ENCODE measurements at regions of chr15 and their contacts with region 1.

Region 1: GRCh38 chr15:33700695-33701304 is 267.5 kb upstream of the CHRM5 start:
- DNase-seq: peak; percentile 64
- ATAC-seq: peak; percentile 68
- H3K4me3 Mint-ChIP-seq: no peak overlapping the region
- H3K27ac Mint-ChIP-seq: no peak overlapping the region
- H3K4me1 Mint-ChIP-seq: no peaks in the 10 kb centered on the region
- H3K27me3 Mint-ChIP-seq: peaks cover 8% of the 10 kb centered on the region

Region 2: GRCh38 chr15:33292717-33293307 is 408.0 kb before region 1 on chr15:
- CTCF ChIA-PET with region 1: interaction called, 22 read pairs
- DNase-seq: peak; percentile 51
- ATAC-seq: no peak
- H3K4me3 Mint-ChIP-seq: no peak overlapping the region
- H3K27ac Mint-ChIP-seq: no peak overlapping the region
- H3K4me1 Mint-ChIP-seq: no peaks in the 10 kb centered on the region
- H3K27me3 Mint-ChIP-seq: peaks cover 2% of the 10 kb centered on the region

Region 3: DNA sequence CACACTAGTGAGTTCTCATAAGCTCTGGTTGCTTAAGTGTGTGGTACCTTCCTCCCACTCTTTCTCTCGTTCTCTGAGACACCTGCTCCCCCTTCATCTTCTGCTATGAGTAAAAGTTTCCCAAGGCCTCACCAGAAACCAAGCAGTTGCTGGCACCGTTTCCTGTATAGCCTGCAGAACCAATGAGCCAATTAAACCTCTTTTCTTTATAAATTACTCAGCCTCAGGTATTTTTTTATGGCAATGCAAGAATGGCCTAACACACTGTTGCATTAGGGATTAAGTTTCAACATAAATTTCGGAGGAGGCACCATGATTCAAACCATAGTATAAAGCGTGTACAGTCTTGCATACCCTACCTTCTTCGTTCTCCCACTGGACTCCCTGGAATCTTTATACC is 15.2 kb after region 1 on chr15:
- CTCF ChIA-PET with region 1: interaction called, 10 read pairs
- DNase-seq: no peak
- ATAC-seq: no peak
- H3K4me3 Mint-ChIP-seq: no peak overlapping the region
- H3K27ac Mint-ChIP-seq: no peak overlapping the region
- H3K4me1 Mint-ChIP-seq: no peaks in the 10 kb centered on the region
- H3K27me3 Mint-ChIP-seq: no peaks in the 10 kb centered on the region

Region 4: DNA sequence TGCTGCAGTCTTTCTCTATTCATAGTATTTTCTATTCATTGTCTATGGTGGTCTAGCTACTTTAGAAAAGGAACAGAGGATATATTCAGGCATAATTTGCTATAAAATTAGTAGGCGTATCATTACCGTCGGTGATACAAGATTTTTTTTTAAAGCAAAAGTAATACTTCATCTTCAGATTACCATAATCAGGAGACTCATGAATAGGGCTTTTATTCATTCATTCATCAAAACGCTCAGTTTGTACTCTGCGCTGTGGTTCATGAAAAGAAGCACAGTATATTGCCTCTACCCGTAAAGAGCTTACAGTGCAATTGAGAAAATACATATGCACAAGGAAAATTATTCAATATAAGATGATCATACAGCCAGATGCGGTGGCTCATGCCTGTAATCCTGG is 130.8 kb after region 1 on chr15:
- CTCF ChIA-PET with region 1: no interaction called
- DNase-seq: no peak
- ATAC-seq: no peak
- H3K4me3 Mint-ChIP-seq: no peak overlapping the region
- H3K27ac Mint-ChIP-seq: no peak overlapping the region
- H3K4me1 Mint-ChIP-seq: no peaks in the 10 kb centered on the region
- H3K27me3 Mint-ChIP-seq: no peaks in the 10 kb centered on the region